ENCODE measurements at regions of chr6 and their contacts with region 1.

Region 1: GRCh38 chr6:128836761-128837160 is 46.2 kb upstream of the LAMA2 start:
- DNase-seq: no peak
- H3K4me3 ChIP-seq: no peak overlapping the region
- H3K27ac ChIP-seq: no peak overlapping the region
- H3K4me1 ChIP-seq: no peaks in the 10 kb centered on the region
- H3K27me3 ChIP-seq: no peaks in the 10 kb centered on the region
- CTCF ChIP-seq: no peak

Region 2: GRCh38 chr6:130473886-130474285 is 1637.1 kb after region 1 on chr6:
- CTCF ChIA-PET with region 1: no interaction called
- POLR2A ChIA-PET with region 1: interaction called, 18 read pairs
- intact Hi-C with region 1: no loop called
- DNase-seq: no peak
- H3K4me3 ChIP-seq: no peak overlapping the region
- H3K27ac ChIP-seq: no peak overlapping the region
- H3K4me1 ChIP-seq: no peaks in the 10 kb centered on the region
- H3K27me3 ChIP-seq: no peaks in the 10 kb centered on the region
- CTCF ChIP-seq: no peak